ENCODE measurements at regions of chrX and their contacts with region 1.

Region 1: DNA sequence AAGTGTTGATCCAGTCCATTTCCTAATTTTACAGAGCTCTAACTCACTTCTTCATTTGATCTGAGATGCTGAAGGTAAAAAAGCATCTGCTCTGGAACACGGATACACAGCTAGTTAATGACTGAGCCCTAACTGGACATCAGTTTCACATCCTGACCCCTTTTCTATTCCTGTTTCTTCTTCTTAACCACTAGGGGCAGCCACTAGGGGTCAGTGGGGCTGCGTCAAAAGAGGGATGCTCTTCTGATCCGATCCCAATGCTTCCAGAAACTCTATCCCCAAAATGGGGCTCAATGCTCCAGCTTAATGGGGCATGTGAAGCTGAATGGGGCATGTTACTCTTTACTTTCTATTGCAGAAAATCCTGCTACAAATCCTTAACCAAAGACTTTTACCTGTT is 33.4 kb upstream of the PHKA2 start:
- DNase-seq: peak; percentile 13
- ATAC-seq: peak; percentile 75
- H3K4me3 ChIP-seq: no peak overlapping the region
- H3K27ac ChIP-seq: no peak overlapping the region
- H3K4me1 ChIP-seq: no peaks in the 10 kb centered on the region
- H3K27me3 ChIP-seq: no peaks in the 10 kb centered on the region
- CTCF ChIP-seq: peak; percentile 66
- EP300 ChIP-seq: no peak
- POLR2A ChIP-seq: no peak
- RAD21 ChIP-seq: no peak

Region 2: GRCh38 chrX:19040373-19040772 is 23.1 kb after region 1 on chrX:
- CTCF ChIA-PET with region 1: no interaction called
- POLR2A ChIA-PET with region 1: no interaction called
- in situ Hi-C with region 1: no loop called
- intact Hi-C with region 1: no loop called
- DNase-seq: no peak
- ATAC-seq: no peak
- H3K4me3 ChIP-seq: no peak overlapping the region
- H3K27ac ChIP-seq: no peak overlapping the region
- H3K4me1 ChIP-seq: no peaks in the 10 kb centered on the region
- H3K27me3 ChIP-seq: no peaks in the 10 kb centered on the region
- CTCF ChIP-seq: 0 out of 2 replicates have a peak, but pooled peaks have one; percentile 22
- EP300 ChIP-seq: no peak
- POLR2A ChIP-seq: no peak
- RAD21 ChIP-seq: no peak

Region 3: GRCh38 chrX:19194285-19195242 is 177.3 kb after region 1 on chrX:
- CTCF ChIA-PET with region 1: no interaction called
- POLR2A ChIA-PET with region 1: no interaction called
- in situ Hi-C with region 1: no loop called
- intact Hi-C with region 1: loop called (anchors 5 kb)
- DNase-seq: no peak
- ATAC-seq: no peak
- H3K4me3 ChIP-seq: no peak overlapping the region
- H3K27ac ChIP-seq: no peak overlapping the region
- H3K4me1 ChIP-seq: no peaks in the 10 kb centered on the region
- H3K27me3 ChIP-seq: peaks cover 0 to 6% of the 10 kb centered on the region in 2 experiments; a peak in 2 of 5 replicates
- CTCF ChIP-seq: no peak
- EP300 ChIP-seq: no peak
- POLR2A ChIP-seq: no peak
- RAD21 ChIP-seq: no peak

Region 4: DNA sequence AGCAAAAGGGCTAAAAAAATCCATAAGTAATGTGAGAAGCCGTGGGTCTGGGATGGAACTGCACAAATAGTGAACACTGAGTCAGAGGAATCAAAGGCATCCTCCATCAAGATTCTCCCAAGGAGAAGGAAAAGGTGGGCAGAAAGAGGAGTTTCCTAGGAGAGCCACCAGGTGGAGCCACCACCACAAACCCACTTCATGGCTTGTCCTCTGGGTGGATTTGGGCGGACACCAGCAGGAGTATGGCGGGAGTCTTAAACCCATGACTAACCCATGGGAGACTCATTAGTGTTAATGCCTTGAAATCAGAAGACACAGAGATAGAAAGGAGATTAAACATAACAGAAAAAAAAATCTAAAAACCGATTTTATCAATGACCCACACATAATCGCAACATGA is 722.4 kb after region 1 on chrX:
- CTCF ChIA-PET with region 1: no interaction called
- POLR2A ChIA-PET with region 1: no interaction called
- in situ Hi-C with region 1: no loop called
- intact Hi-C with region 1: no loop called
- DNase-seq: peak; percentile 20
- ATAC-seq: peak; percentile 65
- H3K4me3 ChIP-seq: no peak overlapping the region
- H3K27ac ChIP-seq: no peak overlapping the region
- H3K4me1 ChIP-seq: peaks cover 35% of the 10 kb centered on the region
- H3K27me3 ChIP-seq: no peaks in the 10 kb centered on the region
- CTCF ChIP-seq: peak; percentile 61
- EP300 ChIP-seq: no peak
- POLR2A ChIP-seq: no peak
- RAD21 ChIP-seq: peak; percentile 28; the same call in 1 of the 2 replicates